ENCODE measurements at regions of chr7 and their contacts with region 1.

Region 1: GRCh38 chr7:118169146-118169545 is 14.8 kb upstream of the LSM8 start:
- H3K4me3 ChIP-seq: no peak overlapping the region
- H3K27ac ChIP-seq: no peak overlapping the region
- H3K4me1 ChIP-seq: no peaks in the 10 kb centered on the region
- CTCF ChIP-seq: no peak

Region 2: GRCh38 chr7:118153551-118154177 is 15.5 kb before region 1 on chr7:
- CTCF ChIA-PET with region 1: interaction called, 12 read pairs
- POLR2A ChIA-PET with region 1: no interaction called
- H3K4me3 ChIP-seq: no peak overlapping the region
- H3K27ac ChIP-seq: no peak overlapping the region
- H3K4me1 ChIP-seq: no peaks in the 10 kb centered on the region
- CTCF ChIP-seq: no peak

Measured in HEK293 (cell line).